A549 (cell line): ENCODE measurements at regions of chr22 and their contacts with region 1.

Region 1: DNA sequence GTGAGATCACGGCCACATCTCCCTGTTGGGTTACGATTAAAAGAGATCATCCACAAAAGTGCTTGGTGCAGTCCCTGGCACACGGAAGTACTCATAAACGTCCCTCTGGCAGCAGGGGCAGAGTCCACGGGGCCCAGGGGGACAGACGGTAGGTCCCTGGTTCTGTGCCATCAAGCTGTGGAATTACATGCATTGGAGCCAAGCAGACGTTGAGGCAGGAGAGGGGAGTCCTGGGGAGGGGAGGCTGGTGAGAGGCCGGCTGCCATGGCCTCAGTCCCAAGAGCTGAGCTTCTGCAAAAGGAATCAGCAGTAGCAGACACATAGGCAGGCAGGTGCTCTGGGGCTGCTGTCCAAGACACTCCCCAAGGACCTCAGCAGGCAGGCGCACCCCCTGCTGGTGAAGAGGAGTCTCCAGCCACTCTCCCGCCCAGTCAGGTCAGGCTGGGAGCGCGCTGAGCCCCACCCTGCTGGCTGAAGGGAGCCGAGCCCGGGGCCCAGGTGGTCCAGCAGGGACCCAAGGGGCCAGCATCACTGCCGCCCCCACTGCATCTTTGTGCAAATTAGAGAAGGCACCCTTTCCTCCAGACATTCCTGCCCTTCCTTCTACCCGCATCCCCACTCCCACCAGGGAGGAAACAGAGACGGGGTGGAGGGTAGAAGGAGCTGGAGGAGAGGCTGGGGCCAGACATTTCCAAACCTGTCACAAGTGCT is 7.6 kb upstream of the KCTD17 start:
- DNase-seq: peak; percentile 82 to 86
- ATAC-seq: peak; percentile 96 to 99
- H3K4me3 ChIP-seq: no peak overlapping the region
- H3K27ac ChIP-seq: peak overlapping the region; percentile 84 to 85
- H3K4me1 ChIP-seq: peaks cover 51% of the 10 kb centered on the region
- CTCF ChIP-seq: peak; percentile 59; the same call in 2 of the 3 replicates
- EP300 ChIP-seq: no peak
- POLR2A ChIP-seq: no peak
- RAD21 ChIP-seq: peak; percentile 70 to 72

Region 2: GRCh38 chr22:36781656-36782627 is 262.0 kb before region 1 on chr22:
- CTCF ChIA-PET with region 1: interaction called, 10 read pairs
- POLR2A ChIA-PET with region 1: no interaction called
- DNase-seq: peak; percentile 74 to 75
- ATAC-seq: peak; percentile 96 to 97
- H3K4me3 ChIP-seq: no peak overlapping the region
- H3K27ac ChIP-seq: peak overlapping the region; percentile 43 to 60; a peak in 5 of 6 replicates
- H3K4me1 ChIP-seq: peaks cover 5% of the 10 kb centered on the region; the same call in 1 of the 3 replicates
- CTCF ChIP-seq: peak; percentile 77
- EP300 ChIP-seq: no peak
- POLR2A ChIP-seq: no peak
- RAD21 ChIP-seq: peak; percentile 82 to 87

Region 3: GRCh38 chr22:36977947-36978660 is 65.9 kb before region 1 on chr22:
- CTCF ChIA-PET with region 1: interaction called, 25 read pairs
- POLR2A ChIA-PET with region 1: no interaction called
- DNase-seq: peak; percentile 82 to 84
- ATAC-seq: peak; percentile 87 to 88
- H3K4me3 ChIP-seq: peak overlapping the region; percentile 46
- H3K27ac ChIP-seq: peak overlapping the region; percentile 63 to 86; a peak in 5 of 6 replicates
- H3K4me1 ChIP-seq: no peaks in the 10 kb centered on the region
- CTCF ChIP-seq: peak; percentile 67
- EP300 ChIP-seq: no peak
- POLR2A ChIP-seq: no peak
- RAD21 ChIP-seq: peak; percentile 78 to 79

Region 4: DNA sequence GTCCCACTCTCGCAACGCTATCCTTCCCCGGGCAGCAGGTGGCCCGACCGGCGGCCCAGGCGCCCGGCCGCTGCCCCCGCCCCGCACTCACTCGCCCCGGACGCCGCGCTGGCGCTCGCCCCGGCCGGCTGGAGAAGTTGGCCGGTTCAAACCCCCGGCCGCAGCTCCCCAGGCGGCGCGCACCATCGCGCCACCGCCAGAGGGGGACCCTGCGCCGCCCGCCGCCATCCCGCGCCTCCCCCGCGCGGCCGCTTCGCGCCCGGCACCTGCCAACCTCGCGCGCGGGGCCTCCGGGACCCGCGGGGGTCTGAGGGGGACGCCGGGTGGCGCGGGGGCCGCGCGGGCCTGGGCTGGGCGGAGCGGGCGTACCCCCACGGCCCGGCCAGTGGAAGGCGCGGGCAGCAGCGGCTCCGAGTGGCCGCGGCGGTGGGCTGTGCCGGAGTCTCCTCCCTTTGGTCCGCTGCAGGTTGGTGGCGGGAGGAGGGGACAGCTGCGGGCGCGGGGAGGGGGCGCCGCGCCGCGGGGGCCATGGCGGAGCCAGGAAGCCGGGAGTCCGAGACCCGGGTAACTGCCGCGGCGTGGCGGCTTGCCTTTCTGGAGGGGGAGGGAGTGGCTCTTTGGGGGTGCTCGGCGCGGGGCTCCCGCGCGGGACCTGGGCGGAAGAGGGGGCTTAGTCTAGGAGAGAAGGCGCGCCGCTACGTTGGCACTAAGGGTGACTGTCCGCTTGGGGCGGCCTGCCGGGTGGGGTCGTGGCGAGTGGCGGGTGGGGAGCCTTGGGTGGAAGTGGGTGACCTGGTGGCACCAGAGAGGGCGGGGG is 24.5 kb before region 1 on chr22 and contains the starts of genes MPST and TST:
- CTCF ChIA-PET with region 1: interaction called, 142 read pairs
- POLR2A ChIA-PET with region 1: no interaction called
- DNase-seq: peak in 1 of 2 experiments; percentile 63
- ATAC-seq: peak; percentile 90 to 91
- H3K4me3 ChIP-seq: peak within 1 kb of the TSS; percentile 98
- H3K27ac ChIP-seq: peak within 1 kb of the TSS; percentile 99 to 100
- H3K4me1 ChIP-seq: peaks cover 53% of the 10 kb centered on the region
- CTCF ChIP-seq: no peak
- EP300 ChIP-seq: no peak
- POLR2A ChIP-seq: peak; percentile 49
- RAD21 ChIP-seq: no peak
- polyA plus RNA-seq, gene MPST: 40.6 and 44.2 TPM in 2 replicates
- polyA plus RNA-seq, gene TST: 43.2 and 49.4 TPM in 2 replicates

Region 5: GRCh38 chr22:37032546-37033460 is 11.2 kb before region 1 on chr22:
- CTCF ChIA-PET with region 1: interaction called, 142 read pairs
- POLR2A ChIA-PET with region 1: interaction called, 8 read pairs
- DNase-seq: peak; percentile 87 to 96
- ATAC-seq: peak; percentile 95 to 96
- H3K4me3 ChIP-seq: peak overlapping the region; percentile 37
- H3K27ac ChIP-seq: peak overlapping the region; percentile 98 to 100
- H3K4me1 ChIP-seq: peaks cover 59% of the 10 kb centered on the region
- CTCF ChIP-seq: no peak; the same call in 2 of the 3 replicates
- EP300 ChIP-seq: peak; percentile 86 to 96; a peak in 4 of 5 replicates
- POLR2A ChIP-seq: 0 out of 2 replicates have a peak, but pooled peaks have one; percentile 18
- RAD21 ChIP-seq: peak in 1 of 2 experiments; percentile 30; a peak in 1 of 5 replicates

Region 6: DNA sequence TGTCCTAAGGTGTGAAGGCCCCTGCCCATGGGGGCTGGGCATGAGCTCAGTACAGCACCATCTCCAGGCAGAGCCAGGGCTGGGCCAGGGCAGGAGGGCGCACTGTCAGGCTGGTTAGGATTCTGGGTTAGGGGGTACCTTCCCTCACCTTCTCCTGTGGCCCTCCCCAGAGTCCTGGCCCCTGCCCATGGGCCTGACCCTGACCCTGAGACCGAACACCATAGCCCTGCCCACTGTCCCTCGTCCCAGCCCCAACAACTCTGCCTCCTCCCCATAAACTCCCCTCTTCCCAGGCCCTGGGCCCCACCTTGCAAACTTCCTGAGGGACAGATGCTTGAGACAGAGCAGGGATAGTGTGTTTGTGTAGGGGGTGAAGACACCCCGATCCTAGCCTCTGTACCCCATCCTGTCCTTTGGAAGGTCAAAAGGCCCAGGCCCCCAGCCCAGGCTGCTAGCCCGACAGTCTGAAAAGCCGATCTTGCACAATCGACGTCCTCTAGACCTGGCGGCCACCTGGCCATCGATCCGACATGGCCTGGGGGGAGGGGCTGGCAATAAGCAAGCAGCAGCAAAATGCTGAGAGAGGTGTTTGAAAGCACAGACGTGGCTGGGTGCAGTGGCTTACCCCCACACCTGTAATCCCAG is 68.2 kb after region 1 on chr22:
- CTCF ChIA-PET with region 1: no interaction called
- POLR2A ChIA-PET with region 1: no interaction called
- DNase-seq: no peak
- ATAC-seq: no peak
- H3K4me3 ChIP-seq: no peak overlapping the region
- H3K27ac ChIP-seq: no peak overlapping the region
- H3K4me1 ChIP-seq: no peaks in the 10 kb centered on the region
- CTCF ChIP-seq: no peak
- EP300 ChIP-seq: no peak
- POLR2A ChIP-seq: no peak
- RAD21 ChIP-seq: no peak

Region 7: GRCh38 chr22:37188901-37189466 is 145.0 kb after region 1 on chr22:
- CTCF ChIA-PET with region 1: no interaction called
- POLR2A ChIA-PET with region 1: no interaction called
- DNase-seq: no peak
- ATAC-seq: no peak
- H3K4me3 ChIP-seq: no peak overlapping the region
- H3K27ac ChIP-seq: peak overlapping the region; percentile 99 to 100
- H3K4me1 ChIP-seq: peaks cover 83% of the 10 kb centered on the region
- CTCF ChIP-seq: no peak
- EP300 ChIP-seq: no peak
- POLR2A ChIP-seq: no peak
- RAD21 ChIP-seq: no peak